ENCODE measurements at regions of chr11 and their contacts with region 1.

Region 1: DNA sequence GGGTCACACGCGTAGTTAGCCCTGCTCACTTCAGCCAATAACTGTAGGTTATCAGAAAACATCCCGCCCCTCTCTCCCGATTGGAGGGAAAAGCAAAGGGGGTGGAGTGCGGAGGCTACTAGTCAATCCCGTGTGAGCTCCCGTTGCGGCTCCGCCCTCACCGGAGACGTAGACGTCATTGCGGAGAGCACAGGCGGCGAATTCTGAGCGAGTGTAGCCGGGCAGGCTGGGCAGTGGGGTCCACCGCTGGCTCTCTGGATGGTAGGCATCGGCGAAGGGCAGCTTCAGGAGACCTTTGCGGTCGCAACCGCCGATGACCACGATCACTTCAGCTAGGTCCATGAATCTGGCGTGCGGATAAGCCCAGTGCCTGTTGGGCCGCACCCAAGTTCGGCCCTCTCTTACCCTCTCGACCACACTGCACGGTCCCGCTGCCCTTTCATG is 4.7 kb downstream of the KLHL35 start:
- DNase-seq: peak; percentile 85
- ATAC-seq: peak; percentile 80
- H3K4me3 Mint-ChIP-seq: peak overlapping the region; percentile 36
- H3K27ac Mint-ChIP-seq: no peak overlapping the region
- H3K4me1 Mint-ChIP-seq: peaks cover 19% of the 10 kb centered on the region
- H3K27me3 Mint-ChIP-seq: peaks cover 52% of the 10 kb centered on the region

Region 2: GRCh38 chr11:75408852-75409219 is 19.5 kb before region 1 on chr11:
- CTCF ChIA-PET with region 1: interaction called, 15 read pairs
- DNase-seq: no peak
- ATAC-seq: no peak
- H3K4me3 Mint-ChIP-seq: no peak overlapping the region
- H3K27ac Mint-ChIP-seq: no peak overlapping the region
- H3K4me1 Mint-ChIP-seq: peaks cover 19% of the 10 kb centered on the region
- H3K27me3 Mint-ChIP-seq: no peaks in the 10 kb centered on the region

Region 3: GRCh38 chr11:75445315-75445953 is 17.1 kb after region 1 on chr11:
- CTCF ChIA-PET with region 1: interaction called, 23 read pairs
- DNase-seq: peak; percentile 78
- ATAC-seq: peak; percentile 77
- H3K4me3 Mint-ChIP-seq: no peak overlapping the region
- H3K27ac Mint-ChIP-seq: no peak overlapping the region
- H3K4me1 Mint-ChIP-seq: no peaks in the 10 kb centered on the region
- H3K27me3 Mint-ChIP-seq: peaks cover 2% of the 10 kb centered on the region

Region 4: GRCh38 chr11:75450826-75451821 is 22.8 kb after region 1 on chr11:
- CTCF ChIA-PET with region 1: interaction called, 23 read pairs
- DNase-seq: no peak
- ATAC-seq: peak; percentile 50
- H3K4me3 Mint-ChIP-seq: no peak overlapping the region
- H3K27ac Mint-ChIP-seq: no peak overlapping the region
- H3K4me1 Mint-ChIP-seq: no peaks in the 10 kb centered on the region
- H3K27me3 Mint-ChIP-seq: peaks cover 2% of the 10 kb centered on the region

Region 5: DNA sequence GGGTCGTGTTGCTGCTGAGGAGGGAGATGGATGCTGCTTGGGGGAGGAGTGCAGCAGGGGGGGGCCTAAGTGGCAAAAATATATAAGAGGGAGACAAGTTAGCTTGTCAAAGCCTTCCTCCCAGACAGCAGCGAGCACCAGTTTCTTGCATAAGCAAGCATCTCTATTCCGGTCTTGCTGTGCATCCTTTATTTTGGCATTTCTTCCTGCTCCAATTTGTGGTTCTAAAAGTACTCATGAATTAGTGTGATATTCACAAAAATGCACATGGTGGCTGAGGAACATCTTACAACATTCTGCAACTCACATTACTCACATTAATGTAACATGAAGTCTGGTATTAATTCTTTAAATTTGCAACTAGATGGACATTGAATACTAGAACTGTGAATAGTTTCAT is 65.3 kb after region 1 on chr11:
- CTCF ChIA-PET with region 1: no interaction called
- DNase-seq: no peak
- ATAC-seq: no peak
- H3K4me3 Mint-ChIP-seq: no peak overlapping the region
- H3K27ac Mint-ChIP-seq: no peak overlapping the region
- H3K4me1 Mint-ChIP-seq: peaks cover 28% of the 10 kb centered on the region
- H3K27me3 Mint-ChIP-seq: no peaks in the 10 kb centered on the region

Region 6: DNA sequence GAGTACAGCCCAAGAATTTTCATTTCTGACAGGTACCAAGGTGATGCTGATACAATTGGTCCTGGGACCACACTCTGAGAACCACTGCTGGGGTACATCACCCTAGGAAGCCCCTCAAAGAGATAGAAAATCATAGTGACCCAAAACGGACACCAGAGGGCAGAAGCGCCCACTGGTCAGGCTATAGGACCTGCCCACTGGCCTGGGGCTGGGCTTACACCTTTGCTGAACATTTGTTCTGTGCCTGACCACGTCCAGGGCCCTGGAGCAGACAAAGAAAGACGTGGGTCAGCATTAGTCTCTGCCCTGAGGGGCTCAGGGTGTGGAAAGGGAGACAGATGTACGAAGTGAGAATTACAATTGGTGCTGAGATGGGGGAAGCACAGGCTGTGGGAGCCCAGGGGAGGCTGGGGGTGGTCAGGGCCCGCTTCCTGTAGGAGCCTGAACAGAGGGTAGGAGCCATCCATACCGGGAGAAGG is 119.3 kb after region 1 on chr11:
- CTCF ChIA-PET with region 1: no interaction called
- DNase-seq: peak; percentile 56
- ATAC-seq: peak; percentile 67
- H3K4me3 Mint-ChIP-seq: no peak overlapping the region
- H3K27ac Mint-ChIP-seq: no peak overlapping the region
- H3K4me1 Mint-ChIP-seq: peaks cover 8% of the 10 kb centered on the region
- H3K27me3 Mint-ChIP-seq: peaks cover 11% of the 10 kb centered on the region

Measured in activated CD8-positive, alpha-beta memory T cell treated with anti-CD3 and anti-CD28 coated beads, Interleukin-2, amount 10 ng/mL, durations not matched to agents 7 days and 5 days (primary cell).